A673 (cell line): ENCODE measurements at regions of chr5 and their contacts with region 1.

Region 1: DNA sequence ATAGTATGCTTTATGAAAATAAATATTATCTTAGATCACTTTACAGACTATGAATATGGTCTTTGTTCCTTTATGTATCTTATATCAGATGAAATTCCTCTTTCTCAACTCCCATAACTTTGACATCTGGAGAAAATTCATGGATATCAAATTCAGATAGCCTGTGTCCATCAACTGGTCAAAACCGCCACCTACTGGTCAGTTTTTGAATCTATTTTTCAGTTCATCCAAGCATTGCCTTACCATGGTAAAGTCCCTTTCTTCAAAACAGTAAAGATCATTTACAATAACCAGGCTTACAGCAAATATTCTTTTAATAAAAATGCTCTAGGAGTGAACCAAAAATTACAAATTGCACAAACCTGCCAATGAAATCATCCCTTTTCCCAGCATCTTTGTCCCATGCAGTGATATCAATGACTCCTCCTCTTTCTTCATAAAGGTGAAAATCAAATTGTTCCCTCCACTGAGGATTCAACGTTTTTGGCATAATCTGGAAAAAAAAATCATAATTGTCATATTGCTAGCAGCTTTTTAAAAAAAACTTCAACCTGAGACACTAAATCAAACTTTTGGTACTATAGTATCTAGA is 290.5 kb downstream of the SLF1 start:
- DNase-seq: peak; percentile 54
- H3K4me3 ChIP-seq: no peak overlapping the region
- H3K27ac ChIP-seq: no peak overlapping the region
- H3K4me1 ChIP-seq: no peaks in the 10 kb centered on the region
- H3K27me3 ChIP-seq: no peaks in the 10 kb centered on the region
- CTCF ChIP-seq: peak; percentile 77

Region 2: GRCh38 chr5:93941897-93942296 is 967.1 kb before region 1 on chr5:
- CTCF ChIA-PET with region 1: no interaction called
- POLR2A ChIA-PET with region 1: no interaction called
- intact Hi-C with region 1: no loop called
- DNase-seq: no peak
- H3K4me3 ChIP-seq: no peak overlapping the region
- H3K27ac ChIP-seq: no peak overlapping the region
- H3K4me1 ChIP-seq: no peaks in the 10 kb centered on the region
- H3K27me3 ChIP-seq: no peaks in the 10 kb centered on the region
- CTCF ChIP-seq: no peak

Region 3: GRCh38 chr5:94830520-94830919 is 78.5 kb before region 1 on chr5:
- CTCF ChIA-PET with region 1: no interaction called
- POLR2A ChIA-PET with region 1: no interaction called
- intact Hi-C with region 1: loop called (anchors 2 kb)
- DNase-seq: peak; percentile 44
- H3K4me3 ChIP-seq: no peak overlapping the region
- H3K27ac ChIP-seq: no peak overlapping the region
- H3K4me1 ChIP-seq: no peaks in the 10 kb centered on the region
- H3K27me3 ChIP-seq: no peaks in the 10 kb centered on the region
- CTCF ChIP-seq: peak; percentile 70

Region 4: DNA sequence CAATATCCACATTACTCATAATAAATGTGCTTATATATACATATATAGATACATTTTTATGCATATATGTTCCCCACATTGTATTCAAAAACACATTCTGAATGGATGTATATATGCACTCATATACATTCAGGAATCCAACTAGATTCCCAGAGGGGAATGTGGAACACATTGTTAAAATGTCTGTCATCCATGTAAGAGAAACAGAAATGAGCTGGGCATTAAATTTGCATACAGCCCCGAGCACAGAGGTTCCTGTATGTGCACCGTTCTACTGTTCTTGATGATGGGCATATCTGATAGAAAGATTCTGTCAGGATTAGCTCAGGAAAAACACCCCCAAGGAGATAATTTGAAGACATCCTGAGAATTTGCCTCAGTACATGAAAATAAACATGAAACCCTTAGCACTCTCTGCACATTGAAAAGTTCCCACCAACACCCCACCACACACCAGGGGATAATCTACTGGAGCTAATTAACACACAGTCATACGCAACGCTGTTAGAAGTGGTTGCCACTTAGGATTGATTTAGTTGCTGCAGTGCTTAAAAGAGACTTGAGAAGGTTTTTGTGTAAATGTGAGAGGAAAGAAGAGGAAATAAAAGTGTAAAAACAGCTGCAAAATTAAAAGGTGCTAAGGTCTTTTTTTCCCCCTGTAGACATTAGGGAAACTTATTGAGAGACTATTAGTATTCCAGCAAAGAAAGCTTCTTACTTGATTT is 67.2 kb before region 1 on chr5:
- CTCF ChIA-PET with region 1: interaction called, 7 read pairs
- POLR2A ChIA-PET with region 1: no interaction called
- intact Hi-C with region 1: loop called (anchors 5 kb)
- DNase-seq: peak; percentile 14
- H3K4me3 ChIP-seq: no peak overlapping the region
- H3K27ac ChIP-seq: no peak overlapping the region
- H3K4me1 ChIP-seq: peaks cover 9% of the 10 kb centered on the region
- H3K27me3 ChIP-seq: no peaks in the 10 kb centered on the region
- CTCF ChIP-seq: no peak

Region 5: DNA sequence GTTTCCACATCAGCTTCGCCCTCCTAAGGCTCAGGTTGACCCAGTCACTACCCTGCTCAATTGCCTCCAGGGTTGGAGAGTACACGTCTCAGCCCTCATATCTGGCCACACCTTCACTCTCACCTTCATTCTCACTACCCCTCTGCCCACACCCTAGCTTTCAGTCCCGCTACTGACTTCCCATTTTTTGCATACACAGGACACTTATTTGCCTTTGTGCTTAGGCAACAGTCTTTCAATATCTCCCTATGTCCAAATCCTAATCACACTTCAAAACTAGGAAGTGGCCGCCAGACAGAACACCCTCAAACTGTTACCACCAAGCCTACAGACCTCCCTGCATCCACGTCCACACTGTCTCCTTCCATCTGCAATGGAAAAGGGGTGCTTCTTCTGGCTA is 365.0 kb after region 1 on chr5:
- CTCF ChIA-PET with region 1: interaction called, 11 read pairs
- POLR2A ChIA-PET with region 1: no interaction called
- intact Hi-C with region 1: no loop called
- DNase-seq: no peak
- H3K4me3 ChIP-seq: no peak overlapping the region
- H3K27ac ChIP-seq: no peak overlapping the region
- H3K4me1 ChIP-seq: no peaks in the 10 kb centered on the region
- H3K27me3 ChIP-seq: peaks cover 21% of the 10 kb centered on the region
- CTCF ChIP-seq: no peak